CD8-positive, alpha-beta memory T cell (primary cell): ENCODE measurements at regions of chr10 and their contacts with region 1.

Region 1: DNA sequence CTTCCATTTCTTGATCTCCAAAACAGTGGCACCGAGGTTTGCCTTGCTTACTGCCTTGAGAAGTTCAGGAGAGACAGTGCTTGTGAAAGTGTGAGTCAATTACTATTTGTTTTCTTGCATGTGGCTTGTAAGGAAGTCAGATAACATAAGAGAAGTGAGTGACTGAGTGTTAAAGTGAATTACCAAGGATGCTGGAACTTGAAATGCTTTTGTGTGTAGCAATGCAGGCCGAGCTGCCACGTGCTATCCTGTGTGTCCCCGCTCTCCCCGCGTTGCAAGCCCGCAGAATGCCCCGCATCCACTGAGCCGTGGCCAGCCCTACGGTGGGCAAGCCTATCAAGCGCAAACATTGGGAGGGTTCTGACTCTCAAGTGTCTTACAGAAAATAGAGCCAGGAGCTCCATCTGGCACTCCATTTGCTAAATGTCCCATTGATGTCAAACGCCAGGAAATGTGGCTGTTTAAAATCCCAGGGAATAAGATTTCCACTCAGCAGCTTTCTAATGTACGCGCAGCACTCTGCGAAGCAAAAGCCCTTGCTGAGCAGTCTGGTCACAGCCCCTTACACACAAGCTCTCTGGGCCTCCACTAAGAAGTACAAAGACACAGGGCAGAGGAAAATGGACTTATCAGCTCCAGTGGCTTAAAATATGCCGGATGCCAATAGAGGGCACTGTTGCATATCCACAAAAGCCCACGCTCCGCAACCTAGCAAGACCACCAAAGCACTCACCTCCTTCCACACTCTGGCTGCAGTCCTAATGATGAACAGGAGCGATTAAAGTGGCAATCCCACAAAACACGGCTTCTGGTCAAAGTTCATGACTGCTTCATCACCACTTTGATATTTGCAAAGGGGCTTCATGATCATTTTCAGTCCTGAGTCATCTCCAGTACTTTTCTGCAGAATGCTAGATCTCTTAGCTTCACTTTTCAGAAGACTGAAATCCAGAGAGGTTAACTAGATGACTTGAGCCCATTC is 158.0 kb upstream of the ITGB1 start:
- DNase-seq: peak in 2 of 5 donors; percentile 22 to 37
- H3K4me3 ChIP-seq: peak overlapping the region; percentile 7
- H3K4me3 Mint-ChIP-seq: peak overlapping the region; percentile 57 to 86 (median 77)
- H3K27ac ChIP-seq: peak overlapping the region; percentile 45
- H3K27ac Mint-ChIP-seq: peak overlapping the region; percentile 89 to 98 (median 94)
- H3K4me1 ChIP-seq: peaks cover 86% of the 10 kb centered on the region
- H3K4me1 Mint-ChIP-seq: peaks cover 92 to 99% (median 97%) of the 10 kb centered on the region in 3 donors
- H3K27me3 ChIP-seq: no peaks in the 10 kb centered on the region
- H3K27me3 Mint-ChIP-seq: no peaks in the 10 kb centered on the region

Region 2: GRCh38 chr10:33134011-33134751 is 18.2 kb after region 1 on chr10:
- CTCF ChIA-PET with region 1: interaction called, 27 read pairs
- POLR2A ChIA-PET with region 1: interaction called, 10 read pairs
- DNase-seq: peak in 4 of 5 donors; percentile 57 to 86 (median 63)
- H3K4me3 ChIP-seq: no peak overlapping the region
- H3K4me3 Mint-ChIP-seq: peak overlapping the region; percentile 2 to 54 (median 27)
- H3K27ac ChIP-seq: peak overlapping the region; percentile 24
- H3K27ac Mint-ChIP-seq: peak overlapping the region; percentile 51 to 100 (median 88)
- H3K4me1 ChIP-seq: peaks cover 78% of the 10 kb centered on the region
- H3K4me1 Mint-ChIP-seq: peaks cover 71 to 94% (median 86%) of the 10 kb centered on the region in 3 donors
- H3K27me3 ChIP-seq: no peaks in the 10 kb centered on the region
- H3K27me3 Mint-ChIP-seq: peaks cover 0 to under 1% of the 10 kb centered on the region in 2 donors

Region 3: GRCh38 chr10:33155720-33156638 is 40.0 kb after region 1 on chr10:
- CTCF ChIA-PET with region 1: interaction called, 14 read pairs
- POLR2A ChIA-PET with region 1: interaction called, 4 read pairs
- DNase-seq: peak in 3 of 5 donors; percentile 59 to 61 (median 60)
- H3K4me3 ChIP-seq: no peak overlapping the region
- H3K4me3 Mint-ChIP-seq: peak overlapping the region in 3 of 7 donors; percentile 14 to 45 (median 29)
- H3K27ac ChIP-seq: no peak overlapping the region
- H3K27ac Mint-ChIP-seq: peak overlapping the region in 6 of 8 donors; percentile 48 to 97 (median 86)
- H3K4me1 ChIP-seq: peaks cover 33% of the 10 kb centered on the region
- H3K4me1 Mint-ChIP-seq: peaks cover 29 to 50% (median 41%) of the 10 kb centered on the region in 3 donors
- H3K27me3 ChIP-seq: no peaks in the 10 kb centered on the region
- H3K27me3 Mint-ChIP-seq: peaks cover 0 to 8% of the 10 kb centered on the region in 2 donors